CD8-positive, alpha-beta T cell (primary cell): ENCODE measurements at regions of chr5 and their contacts with region 1.

Region 1: DNA sequence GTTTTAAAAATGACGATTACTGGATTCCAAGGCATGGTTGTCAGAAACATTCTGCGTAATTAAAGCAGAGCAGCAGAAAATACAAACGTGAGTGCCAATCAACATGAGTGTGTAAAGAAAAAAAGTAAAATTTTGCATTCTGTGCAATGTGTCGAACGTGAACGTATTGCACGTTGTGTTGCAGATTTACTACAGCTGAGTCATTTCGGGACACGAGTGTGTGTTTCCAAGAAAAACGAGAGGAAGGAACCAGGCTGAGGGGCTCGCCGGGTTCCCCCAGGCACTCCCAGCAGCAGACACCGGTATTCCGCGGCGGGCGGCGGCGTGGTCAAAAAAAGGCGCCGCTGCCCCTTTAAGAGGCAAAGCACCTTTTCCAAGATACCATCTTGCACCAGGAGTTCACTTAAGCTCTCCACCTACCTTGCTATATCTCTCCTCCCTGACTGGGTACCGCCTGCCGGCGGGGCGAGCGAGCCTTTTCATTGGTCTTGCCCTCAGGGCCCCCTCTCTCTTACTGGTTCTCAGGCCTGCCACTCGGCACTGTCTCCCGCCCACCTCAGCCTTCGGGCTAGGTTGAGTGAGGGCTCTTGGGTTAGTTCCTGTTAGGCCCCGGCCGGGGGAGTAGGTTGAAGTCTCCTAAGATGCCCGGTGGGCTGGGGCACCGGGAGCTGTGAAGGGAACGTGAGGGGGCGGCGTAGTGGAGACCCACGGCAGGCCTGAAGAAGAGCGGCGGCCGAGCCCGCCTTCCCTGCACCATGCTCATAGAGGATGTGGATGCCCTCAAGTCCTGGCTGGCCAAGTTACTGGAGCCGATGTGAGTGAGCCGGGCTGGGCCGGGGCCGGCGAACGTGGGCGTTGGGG is at the start of gene RBM27:
- DNase-seq: peak; percentile 91 to 99 (median 96)
- ATAC-seq: peak; percentile 99
- H3K4me3 ChIP-seq: peak within 1 kb of the TSS; percentile 72 to 99
- H3K4me3 Mint-ChIP-seq: no peak within 1 kb of the TSS
- H3K27ac ChIP-seq: peak within 1 kb of the TSS; percentile 65 to 94
- H3K27ac Mint-ChIP-seq: no peak within 1 kb of the TSS
- H3K4me1 ChIP-seq: peaks cover 26% of the 10 kb centered on the region
- H3K4me1 Mint-ChIP-seq: peaks cover 20% of the 10 kb centered on the region
- H3K27me3 ChIP-seq: no peaks in the 10 kb centered on the region
- H3K27me3 Mint-ChIP-seq: no peaks in the 10 kb centered on the region
- CTCF ChIP-seq: no peak
- total RNA-seq, gene RBM27: 35.8 to 36.8 TPM

Region 2: GRCh38 chr5:144703776-144704175 is 1499.5 kb before region 1 on chr5:
- CTCF ChIA-PET with region 1: no interaction called
- POLR2A ChIA-PET with region 1: no interaction called
- intact Hi-C with region 1: no loop called
- DNase-seq: no peak
- ATAC-seq: no peak
- H3K4me3 ChIP-seq: no peak overlapping the region
- H3K4me3 Mint-ChIP-seq: no peak overlapping the region
- H3K27ac ChIP-seq: no peak overlapping the region
- H3K27ac Mint-ChIP-seq: no peak overlapping the region
- H3K4me1 ChIP-seq: no peaks in the 10 kb centered on the region
- H3K4me1 Mint-ChIP-seq: no peaks in the 10 kb centered on the region
- H3K27me3 ChIP-seq: no peaks in the 10 kb centered on the region
- H3K27me3 Mint-ChIP-seq: no peaks in the 10 kb centered on the region
- CTCF ChIP-seq: no peak

Region 3: DNA sequence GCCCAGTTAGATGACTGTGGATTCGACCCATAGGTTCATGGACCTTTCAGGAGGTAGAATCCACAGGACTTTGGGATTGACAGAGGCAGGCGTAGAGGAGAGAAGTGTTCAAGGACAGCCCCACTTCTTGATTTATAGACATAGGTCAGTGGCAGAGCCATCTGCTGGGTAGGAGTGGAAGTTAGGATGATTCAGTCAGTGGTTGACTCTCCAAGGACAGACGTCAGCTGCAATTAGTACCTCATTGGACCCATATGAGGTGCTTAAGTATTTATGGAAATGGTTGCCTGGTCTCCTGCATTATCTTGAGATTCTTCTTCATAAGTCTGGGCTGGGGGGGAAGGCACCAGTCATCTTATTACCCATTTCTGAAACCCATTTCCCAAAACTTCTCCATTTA is 196.0 kb before region 1 on chr5:
- CTCF ChIA-PET with region 1: no interaction called
- POLR2A ChIA-PET with region 1: no interaction called
- intact Hi-C with region 1: no loop called
- DNase-seq: no peak
- ATAC-seq: no peak
- H3K4me3 ChIP-seq: no peak overlapping the region
- H3K4me3 Mint-ChIP-seq: no peak overlapping the region
- H3K27ac ChIP-seq: no peak overlapping the region
- H3K27ac Mint-ChIP-seq: no peak overlapping the region
- H3K4me1 ChIP-seq: no peaks in the 10 kb centered on the region
- H3K4me1 Mint-ChIP-seq: no peaks in the 10 kb centered on the region
- H3K27me3 ChIP-seq: no peaks in the 10 kb centered on the region
- H3K27me3 Mint-ChIP-seq: peaks cover 9% of the 10 kb centered on the region
- CTCF ChIP-seq: no peak

Region 4: DNA sequence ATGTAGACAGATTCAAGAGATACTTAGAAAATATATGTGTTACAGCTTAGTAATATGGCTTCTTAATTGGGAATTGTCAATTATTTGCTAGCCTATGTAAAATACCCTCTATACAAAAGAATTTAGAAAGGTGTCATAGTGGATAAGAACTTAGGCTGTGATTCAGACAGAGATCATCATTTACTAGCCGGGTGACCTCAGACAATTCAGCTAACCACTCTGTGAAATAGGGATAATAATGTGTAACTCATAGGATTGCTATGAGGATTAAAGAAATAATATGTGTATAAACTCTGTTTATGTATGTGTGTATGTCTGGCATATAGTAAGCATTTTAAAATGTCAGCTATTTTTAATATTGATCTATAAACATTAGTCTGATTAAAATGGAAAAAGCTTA is 14.9 kb before region 1 on chr5:
- CTCF ChIA-PET with region 1: no interaction called
- POLR2A ChIA-PET with region 1: interaction called, 15 read pairs
- intact Hi-C with region 1: no loop called
- DNase-seq: no peak
- ATAC-seq: no peak
- H3K4me3 ChIP-seq: no peak overlapping the region
- H3K4me3 Mint-ChIP-seq: no peak overlapping the region
- H3K27ac ChIP-seq: no peak overlapping the region
- H3K27ac Mint-ChIP-seq: no peak overlapping the region
- H3K4me1 ChIP-seq: no peaks in the 10 kb centered on the region
- H3K4me1 Mint-ChIP-seq: no peaks in the 10 kb centered on the region
- H3K27me3 ChIP-seq: peaks cover 0 to 6% of the 10 kb centered on the region in 2 experiments
- H3K27me3 Mint-ChIP-seq: peaks cover 13% of the 10 kb centered on the region
- CTCF ChIP-seq: no peak

Region 5: GRCh38 chr5:146213210-146213826 is 10.1 kb after region 1 on chr5:
- CTCF ChIA-PET with region 1: interaction called, 3 read pairs
- POLR2A ChIA-PET with region 1: interaction called, 14 read pairs
- intact Hi-C with region 1: no loop called
- DNase-seq: peak in 1 of 9 experiments; percentile 31
- ATAC-seq: no peak
- H3K4me3 ChIP-seq: no peak overlapping the region
- H3K4me3 Mint-ChIP-seq: no peak overlapping the region
- H3K27ac ChIP-seq: no peak overlapping the region
- H3K27ac Mint-ChIP-seq: no peak overlapping the region
- H3K4me1 ChIP-seq: peaks cover 27% of the 10 kb centered on the region
- H3K4me1 Mint-ChIP-seq: peaks cover 65% of the 10 kb centered on the region
- H3K27me3 ChIP-seq: no peaks in the 10 kb centered on the region
- H3K27me3 Mint-ChIP-seq: no peaks in the 10 kb centered on the region
- CTCF ChIP-seq: no peak

Region 6: GRCh38 chr5:146388386-146388785 is 185.1 kb after region 1 on chr5:
- CTCF ChIA-PET with region 1: no interaction called
- POLR2A ChIA-PET with region 1: no interaction called
- intact Hi-C with region 1: no loop called
- DNase-seq: no peak
- ATAC-seq: no peak
- H3K4me3 ChIP-seq: no peak overlapping the region
- H3K4me3 Mint-ChIP-seq: no peak overlapping the region
- H3K27ac ChIP-seq: no peak overlapping the region
- H3K27ac Mint-ChIP-seq: no peak overlapping the region
- H3K4me1 ChIP-seq: no peaks in the 10 kb centered on the region
- H3K4me1 Mint-ChIP-seq: no peaks in the 10 kb centered on the region
- H3K27me3 ChIP-seq: no peaks in the 10 kb centered on the region
- H3K27me3 Mint-ChIP-seq: peaks cover 4% of the 10 kb centered on the region
- CTCF ChIP-seq: no peak

Region 7: DNA sequence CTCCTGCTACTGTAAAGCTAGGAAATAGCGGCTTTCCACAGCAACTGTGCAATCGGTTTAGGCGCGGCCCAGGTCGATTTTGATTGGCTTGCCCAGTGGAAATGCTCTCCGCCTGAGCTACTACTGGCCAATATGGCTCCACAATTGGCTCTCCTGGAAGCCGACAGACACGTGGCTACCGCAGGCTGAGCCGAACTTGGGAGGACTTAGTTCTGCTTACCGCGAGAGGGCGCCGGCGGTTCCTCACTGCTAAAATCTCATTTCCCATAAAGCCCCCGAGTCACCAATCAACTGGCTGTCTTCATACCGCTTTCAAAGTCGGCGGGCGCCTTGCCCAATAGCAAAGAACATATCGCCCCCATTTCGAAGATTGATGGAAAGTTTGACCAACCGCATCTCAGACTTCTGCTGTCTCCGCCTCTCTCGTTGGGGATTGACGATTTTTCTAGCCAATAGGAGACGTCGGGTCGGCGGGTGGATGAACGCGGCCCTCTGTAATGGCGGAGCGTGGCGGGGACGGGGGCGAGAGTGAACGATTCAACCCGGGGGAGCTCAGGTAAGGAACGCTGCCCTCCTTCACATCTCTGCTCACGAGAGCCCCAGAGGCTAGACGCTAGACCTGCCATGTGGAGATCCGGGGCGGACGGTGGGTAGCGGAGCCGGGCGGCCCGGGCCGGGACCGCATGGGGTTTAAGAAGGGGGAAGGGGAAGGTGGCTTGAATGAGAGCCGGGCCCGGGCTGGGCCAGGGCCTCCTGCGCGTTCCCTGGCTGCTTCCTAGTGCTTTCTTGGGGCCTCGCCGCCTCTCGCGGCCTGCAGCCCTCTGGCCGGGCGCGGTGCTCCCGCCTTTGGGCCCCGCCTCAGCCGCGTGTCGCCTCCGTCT is 243.9 kb after region 1 on chr5 and contains the start of gene TCERG1:
- CTCF ChIA-PET with region 1: no interaction called
- POLR2A ChIA-PET with region 1: no interaction called
- intact Hi-C with region 1: loop called in 1 of 2 experiments (anchors 1 kb)
- DNase-seq: peak; percentile 91 to 100 (median 96)
- ATAC-seq: peak; percentile 87
- H3K4me3 ChIP-seq: peak within 1 kb of the TSS; percentile 79 to 99
- H3K4me3 Mint-ChIP-seq: peak within 1 kb of the TSS; percentile 99
- H3K27ac ChIP-seq: peak within 1 kb of the TSS; percentile 85 to 97
- H3K27ac Mint-ChIP-seq: peak within 1 kb of the TSS; percentile 99
- H3K4me1 ChIP-seq: peaks cover 27% of the 10 kb centered on the region
- H3K4me1 Mint-ChIP-seq: peaks cover 43% of the 10 kb centered on the region
- H3K27me3 ChIP-seq: no peaks in the 10 kb centered on the region
- H3K27me3 Mint-ChIP-seq: no peaks in the 10 kb centered on the region
- CTCF ChIP-seq: peak; percentile 65
- total RNA-seq, gene TCERG1: 110 to 114 TPM

Region 8: DNA sequence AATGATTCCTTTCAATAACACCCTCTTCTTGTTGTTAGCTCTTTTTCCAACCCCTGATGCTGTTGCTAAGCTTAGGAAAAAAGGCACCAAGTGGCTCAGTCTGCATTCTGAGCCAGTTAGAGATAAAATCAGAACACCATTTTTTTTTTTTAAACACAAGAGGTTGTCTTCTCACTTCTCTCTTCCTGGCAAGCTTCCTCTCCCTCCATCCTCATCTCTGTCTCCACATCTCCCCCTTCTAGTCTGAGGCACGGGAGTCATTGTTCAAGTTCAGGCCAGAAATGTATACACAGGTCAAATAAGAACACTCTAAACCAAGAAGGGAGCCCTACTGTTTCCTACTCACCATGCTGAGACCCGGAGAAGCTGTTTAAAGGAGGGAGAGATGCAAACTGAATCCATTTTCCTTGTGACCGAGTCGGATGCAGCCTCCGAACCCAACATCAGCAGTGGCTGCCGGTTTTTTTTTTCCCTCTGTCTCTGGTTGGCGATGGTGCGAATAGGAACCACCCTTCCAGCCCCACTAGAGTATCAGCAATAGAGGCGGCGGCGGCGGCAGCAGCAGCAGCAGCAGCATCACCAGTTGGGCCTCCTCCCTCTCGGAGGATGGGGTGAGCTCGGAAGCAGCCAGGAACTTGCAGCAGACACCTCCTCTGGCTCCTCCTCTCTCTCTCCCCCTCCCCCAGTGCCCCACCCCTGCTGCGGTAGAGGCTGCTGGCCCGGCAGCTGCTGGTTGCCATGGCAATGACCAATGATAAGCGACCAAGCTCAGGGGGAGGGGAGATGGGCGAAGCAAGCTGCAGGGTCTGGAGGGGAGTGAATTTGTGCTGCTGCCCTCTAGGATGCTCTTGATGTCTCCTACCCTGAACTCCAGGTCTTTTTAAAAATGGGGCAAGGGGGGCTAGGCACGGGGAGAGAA is 1579.1 kb after region 1 on chr5 and contains the start of gene JAKMIP2:
- CTCF ChIA-PET with region 1: no interaction called
- POLR2A ChIA-PET with region 1: interaction called, 3 read pairs
- intact Hi-C with region 1: loop called in 1 of 2 experiments (anchors 10 kb)
- DNase-seq: peak; percentile 70 to 92 (median 85)
- ATAC-seq: peak; percentile 96
- H3K4me3 ChIP-seq: peak within 1 kb of the TSS; percentile 51 to 60
- H3K4me3 Mint-ChIP-seq: peak within 1 kb of the TSS; percentile 84
- H3K27ac ChIP-seq: peak within 1 kb of the TSS; percentile 46 to 77
- H3K27ac Mint-ChIP-seq: peak within 1 kb of the TSS; percentile 92
- H3K4me1 ChIP-seq: peaks cover 11% of the 10 kb centered on the region
- H3K4me1 Mint-ChIP-seq: peaks cover 31% of the 10 kb centered on the region
- H3K27me3 ChIP-seq: no peaks in the 10 kb centered on the region
- H3K27me3 Mint-ChIP-seq: no peaks in the 10 kb centered on the region
- CTCF ChIP-seq: no peak
- total RNA-seq, gene JAKMIP2: 1.1 to 2.0 TPM